IMR-90 (cell line): ENCODE measurements at regions of chr5 and their contacts with region 1.

Region 1: DNA sequence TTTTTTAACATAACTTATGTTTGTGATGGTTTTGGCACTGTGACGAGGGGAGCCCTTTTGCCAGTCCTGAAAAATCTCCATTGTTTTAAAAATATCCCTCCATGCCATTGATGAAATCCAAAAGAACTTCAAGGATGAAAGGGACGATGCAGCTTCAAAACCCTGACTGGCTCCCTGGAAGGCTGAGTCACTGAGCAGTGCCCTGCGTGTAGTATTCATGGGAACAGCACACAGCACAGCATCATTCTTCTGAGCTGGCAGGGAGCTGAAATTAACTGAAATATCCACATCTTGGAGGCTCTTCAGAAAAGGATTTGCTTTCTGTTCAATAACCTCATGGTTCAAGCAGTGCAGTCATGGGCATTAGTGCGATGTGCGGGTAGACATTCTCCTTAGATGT is 29.7 kb downstream of the PDE4D start:
- DNase-seq: peak; percentile 27
- ATAC-seq: peak; percentile 66
- H3K4me3 ChIP-seq: no peak overlapping the region
- H3K27ac ChIP-seq: no peak overlapping the region
- H3K4me1 ChIP-seq: no peaks in the 10 kb centered on the region
- H3K27me3 ChIP-seq: no peaks in the 10 kb centered on the region
- CTCF ChIP-seq: no peak
- POLR2A ChIP-seq: no peak
- RAD21 ChIP-seq: no peak

Region 2: GRCh38 chr5:59845730-59846129 is 18.0 kb before region 1 on chr5:
- CTCF ChIA-PET with region 1: no interaction called
- POLR2A ChIA-PET with region 1: no interaction called
- dilution Hi-C with region 1: no loop called
- in situ Hi-C with region 1: no loop called
- intact Hi-C with region 1: loop called (anchors 2 kb)
- DNase-seq: peak; percentile 58
- ATAC-seq: peak; percentile 48; the same call in 1 of the 2 replicates
- H3K4me3 ChIP-seq: no peak overlapping the region
- H3K27ac ChIP-seq: no peak overlapping the region
- H3K4me1 ChIP-seq: peaks cover 2% of the 10 kb centered on the region; the same call in 1 of the 2 replicates
- H3K27me3 ChIP-seq: no peaks in the 10 kb centered on the region
- CTCF ChIP-seq: no peak
- POLR2A ChIP-seq: no peak
- RAD21 ChIP-seq: no peak